ENCODE measurements at regions of chr2 and their contacts with region 1.

Region 1: DNA sequence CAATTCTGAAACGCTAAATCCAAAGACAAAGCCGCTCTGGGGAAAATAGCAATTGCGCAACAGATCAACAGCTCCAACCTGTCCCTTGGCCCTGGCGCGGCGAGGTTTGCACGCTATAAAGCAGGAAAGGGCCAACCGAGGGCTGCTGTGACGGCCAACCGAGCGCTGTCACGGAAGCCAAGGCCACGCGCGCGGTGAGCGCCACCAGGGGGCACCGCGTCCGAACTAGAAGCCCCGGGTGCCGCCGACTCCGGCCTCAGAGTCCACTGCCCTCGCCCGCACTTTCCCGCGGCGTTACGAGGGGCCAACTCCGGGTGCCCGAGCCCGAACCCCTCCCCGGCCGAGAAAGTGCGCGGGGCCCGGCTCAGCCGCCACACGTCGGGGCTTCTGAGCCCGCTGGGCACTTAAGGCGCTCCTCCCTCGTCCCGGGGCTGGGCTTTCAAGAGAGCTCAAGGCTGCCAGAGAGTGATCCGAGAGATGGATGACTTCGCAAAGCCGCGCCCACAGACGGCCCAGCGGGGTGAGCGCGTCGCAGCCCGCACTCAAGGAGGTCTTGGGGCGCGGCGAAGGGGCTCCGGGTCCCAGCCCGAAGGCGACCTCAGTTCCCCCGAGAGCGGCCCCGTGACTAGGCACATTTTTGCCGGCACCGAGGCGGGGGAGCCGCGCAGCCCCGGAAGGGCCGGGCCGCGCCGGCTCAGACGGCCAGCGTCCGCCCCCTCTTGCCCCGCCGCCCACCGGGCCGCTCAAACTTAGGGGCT is 897 bp downstream of the NFE2L2 start:
- DNase-seq: peak; percentile 92
- H3K4me3 ChIP-seq: peak overlapping the region; percentile 80
- H3K27ac ChIP-seq: peak overlapping the region; percentile 99
- H3K27me3 ChIP-seq: no peaks in the 10 kb centered on the region
- CTCF ChIP-seq: peak; percentile 85

Region 2: GRCh38 chr2:177239932-177240630 is 23.5 kb before region 1 on chr2:
- CTCF ChIA-PET with region 1: interaction called, 20 read pairs
- POLR2A ChIA-PET with region 1: interaction called, 7 read pairs
- DNase-seq: no peak
- H3K4me3 ChIP-seq: no peak overlapping the region
- H3K27ac ChIP-seq: no peak overlapping the region
- H3K27me3 ChIP-seq: no peaks in the 10 kb centered on the region
- CTCF ChIP-seq: no peak

Region 3: DNA sequence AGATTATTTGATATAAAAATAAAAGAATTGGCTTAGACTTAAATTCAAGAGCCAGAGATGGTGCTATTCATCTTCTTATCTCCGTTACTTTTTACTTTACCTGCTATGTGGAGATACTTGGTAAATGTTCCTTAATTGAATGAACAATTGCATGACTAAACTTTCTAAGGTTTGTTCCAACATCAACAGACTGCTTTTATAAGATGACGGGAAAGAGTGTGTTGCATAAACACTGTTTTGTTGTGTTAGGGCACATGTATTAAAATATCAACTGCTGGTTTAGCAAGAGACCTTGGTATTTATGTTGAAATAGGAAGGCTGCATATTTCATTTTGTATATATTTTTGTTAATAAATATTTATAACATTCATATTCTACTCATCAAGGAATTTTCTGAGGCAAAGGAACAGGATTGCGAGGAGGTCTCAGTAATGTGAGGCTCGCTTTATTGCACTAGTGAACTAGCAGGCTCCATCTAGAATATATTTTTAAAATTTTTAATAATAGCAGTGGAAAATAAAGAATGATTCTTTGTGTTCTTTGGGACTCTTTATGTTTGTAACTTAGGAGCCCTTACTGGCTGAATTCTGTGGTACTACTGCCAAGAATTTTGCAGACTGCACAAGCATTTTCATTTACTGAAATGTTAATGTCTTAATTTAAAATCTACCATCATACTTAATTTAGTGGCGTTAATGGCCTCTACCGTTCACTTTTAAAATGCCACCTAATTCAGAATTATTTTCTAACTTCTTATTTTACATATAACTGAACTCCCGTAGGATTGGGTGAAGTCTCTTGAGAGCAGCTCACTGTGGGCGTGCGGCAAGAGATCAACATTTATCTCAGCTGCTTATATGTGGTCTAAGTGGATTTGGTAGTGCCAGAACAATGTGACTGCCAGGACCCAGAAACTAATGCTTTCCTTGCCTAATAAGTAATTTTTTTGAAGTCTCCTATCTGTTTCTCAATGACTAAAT is 11.7 kb after region 1 on chr2:
- CTCF ChIA-PET with region 1: interaction called, 22 read pairs
- POLR2A ChIA-PET with region 1: interaction called, 23 read pairs
- DNase-seq: peak; percentile 77
- H3K4me3 ChIP-seq: no peak overlapping the region; the same call in 1 of the 2 replicates
- H3K27ac ChIP-seq: no peak overlapping the region
- H3K27me3 ChIP-seq: no peaks in the 10 kb centered on the region
- CTCF ChIP-seq: no peak

Region 4: DNA sequence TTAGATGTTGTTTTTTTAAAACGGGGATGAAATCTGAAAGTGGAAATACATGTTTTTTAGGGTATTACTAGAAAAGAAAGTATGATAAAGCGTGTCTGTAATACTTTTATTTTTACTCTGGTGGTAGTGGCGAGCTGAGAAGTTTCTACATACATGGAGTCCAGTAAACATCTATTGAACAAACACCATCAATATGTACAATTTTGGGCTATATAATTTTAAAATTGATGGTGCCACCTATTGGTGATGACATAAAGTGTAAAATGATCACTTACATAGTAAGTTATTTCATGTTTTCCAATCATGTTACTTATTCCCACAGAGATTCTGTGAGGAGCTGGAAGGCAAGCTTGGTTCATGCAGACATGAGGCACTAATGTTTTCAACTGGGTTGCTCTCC is 32.4 kb after region 1 on chr2:
- CTCF ChIA-PET with region 1: interaction called, 5 read pairs
- POLR2A ChIA-PET with region 1: interaction called, 24 read pairs
- DNase-seq: no peak
- H3K4me3 ChIP-seq: no peak overlapping the region
- H3K27ac ChIP-seq: no peak overlapping the region
- H3K27me3 ChIP-seq: no peaks in the 10 kb centered on the region
- CTCF ChIP-seq: peak; percentile 36

Region 5: GRCh38 chr2:177314194-177314593 is 50.6 kb after region 1 on chr2:
- CTCF ChIA-PET with region 1: interaction called, 4 read pairs
- POLR2A ChIA-PET with region 1: interaction called, 13 read pairs
- DNase-seq: peak; percentile 74
- H3K4me3 ChIP-seq: no peak overlapping the region
- H3K27ac ChIP-seq: no peak overlapping the region
- H3K27me3 ChIP-seq: no peaks in the 10 kb centered on the region
- CTCF ChIP-seq: no peak

Measured in AG04450 (cell line).